ENCODE measurements at regions of chr14 and their contacts with region 1.

Region 1: GRCh38 chr14:50003213-50004031 is 110.5 kb downstream of the ARF6 start:
- DNase-seq: peak; percentile 75 to 80
- ATAC-seq: peak; percentile 49 to 66
- H3K4me3 ChIP-seq: peak overlapping the region; percentile 48
- H3K27ac ChIP-seq: peak overlapping the region; percentile 90 to 94
- H3K4me1 ChIP-seq: peaks cover 64% of the 10 kb centered on the region
- CTCF ChIP-seq: no peak; the same call in 1 of the 3 replicates
- EP300 ChIP-seq: no peak
- POLR2A ChIP-seq: peak; percentile 66
- RAD21 ChIP-seq: peak; percentile 23 to 67

Region 2: DNA sequence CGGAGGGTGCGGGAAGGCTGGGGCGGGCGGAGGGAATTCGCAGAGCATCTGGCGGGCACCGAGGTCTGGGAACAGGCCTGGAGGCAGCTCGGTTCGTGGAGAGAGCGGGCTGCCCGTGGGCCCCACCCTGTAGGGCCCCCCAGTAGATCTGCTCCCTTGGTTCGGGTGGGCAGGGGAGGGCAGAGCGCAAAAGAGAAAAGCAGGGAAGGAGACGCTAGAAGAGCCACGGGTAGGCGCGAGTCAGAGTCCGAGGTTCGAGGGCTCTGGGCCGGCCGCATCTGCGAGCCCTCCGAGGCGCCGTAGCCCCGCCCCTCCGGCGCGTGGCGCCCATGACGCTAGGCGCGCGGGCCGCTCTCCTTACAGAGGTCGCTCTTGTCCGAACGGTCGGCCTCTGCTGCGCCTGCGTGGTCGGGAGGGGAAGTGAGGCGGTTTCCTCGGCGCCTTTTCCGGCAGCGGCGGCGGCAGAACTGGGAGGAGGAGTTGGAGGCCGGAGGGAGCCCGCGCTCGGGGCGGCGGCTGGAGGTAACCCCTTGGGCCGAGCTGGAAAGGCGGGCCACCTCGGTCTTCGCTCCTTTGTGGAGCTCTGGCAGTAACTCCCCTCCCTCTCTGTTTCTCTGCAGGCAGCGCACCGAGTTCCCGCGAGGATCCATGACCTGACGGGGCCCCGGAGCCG is 110.7 kb before region 1 on chr14 and contains the start of gene ARF6:
- CTCF ChIA-PET with region 1: interaction called, 3 read pairs
- POLR2A ChIA-PET with region 1: interaction called, 10 read pairs
- DNase-seq: peak; percentile 87 to 98
- ATAC-seq: peak; percentile 94 to 95
- H3K4me3 ChIP-seq: peak within 1 kb of the TSS; percentile 67
- H3K27ac ChIP-seq: peak within 1 kb of the TSS; percentile 96 to 98
- H3K4me1 ChIP-seq: peaks cover 21% of the 10 kb centered on the region
- CTCF ChIP-seq: 0 out of 3 replicates have a peak, but pooled peaks have one; percentile 12
- EP300 ChIP-seq: no peak
- POLR2A ChIP-seq: peak; percentile 78
- RAD21 ChIP-seq: peak; percentile 18 to 46; a peak in 4 of 5 replicates
- polyA plus RNA-seq, gene ARF6: 29.8 and 33.3 TPM in 2 replicates